CD14-positive monocyte (primary cell): ENCODE measurements at regions of chr10 and their contacts with region 1.

Region 1: DNA sequence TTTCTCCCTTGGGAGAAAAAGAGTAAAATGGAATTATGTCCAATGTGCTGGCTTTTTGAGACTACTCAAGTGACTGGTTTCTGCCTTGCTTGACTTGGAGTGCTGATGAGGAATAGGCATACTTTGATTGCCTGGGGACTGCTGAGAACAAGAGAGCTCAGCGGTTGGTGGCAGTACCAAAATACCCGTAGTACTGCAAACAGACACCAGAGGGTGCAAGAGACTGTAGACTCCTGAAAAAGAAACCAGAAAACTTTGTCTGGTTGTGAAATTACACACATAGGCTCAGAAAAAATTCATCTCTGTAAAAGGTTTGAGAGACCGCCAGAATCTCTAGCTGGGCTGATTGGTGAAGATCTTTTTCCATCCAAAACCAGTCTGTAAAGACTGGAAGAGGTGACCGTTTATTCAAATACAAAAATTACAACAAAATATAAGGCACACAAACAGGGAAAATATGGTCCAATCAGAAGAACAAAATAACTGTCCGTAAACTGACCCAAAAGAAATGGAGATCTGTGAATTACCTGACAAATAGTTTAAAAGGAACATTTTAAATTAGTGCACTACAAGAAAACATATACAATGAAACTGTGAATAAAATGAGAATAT is 18.5 kb downstream of the BICC1 start:
- DNase-seq: peak; percentile 50 to 76 (median 57)
- H3K4me3 ChIP-seq: no peak overlapping the region
- H3K4me3 Mint-ChIP-seq: no peak overlapping the region
- H3K27ac ChIP-seq: no peak overlapping the region
- H3K27ac Mint-ChIP-seq: no peak overlapping the region
- H3K4me1 ChIP-seq: no peaks in the 10 kb centered on the region
- H3K4me1 Mint-ChIP-seq: peaks cover 5% of the 10 kb centered on the region
- H3K27me3 ChIP-seq: no peaks in the 10 kb centered on the region
- H3K27me3 Mint-ChIP-seq: peaks cover 0 to 3% (median 2%) of the 10 kb centered on the region in 3 donors
- CTCF ChIP-seq: peak; percentile 92

Region 2: GRCh38 chr10:58712982-58713381 is 181.8 kb after region 1 on chr10:
- intact Hi-C with region 1: no loop called
- DNase-seq: no peak
- H3K4me3 ChIP-seq: no peak overlapping the region
- H3K4me3 Mint-ChIP-seq: no peak overlapping the region
- H3K27ac ChIP-seq: no peak overlapping the region
- H3K27ac Mint-ChIP-seq: no peak overlapping the region
- H3K4me1 ChIP-seq: no peaks in the 10 kb centered on the region
- H3K4me1 Mint-ChIP-seq: no peaks in the 10 kb centered on the region
- H3K27me3 ChIP-seq: no peaks in the 10 kb centered on the region
- H3K27me3 Mint-ChIP-seq: peaks cover 0 to 2% (median 0%) of the 10 kb centered on the region in 3 donors
- CTCF ChIP-seq: no peak

Region 3: GRCh38 chr10:58743466-58744115 is 212.4 kb after region 1 on chr10:
- intact Hi-C with region 1: no loop called
- DNase-seq: no peak
- H3K4me3 ChIP-seq: no peak overlapping the region
- H3K4me3 Mint-ChIP-seq: no peak overlapping the region
- H3K27ac ChIP-seq: no peak overlapping the region
- H3K27ac Mint-ChIP-seq: no peak overlapping the region
- H3K4me1 ChIP-seq: no peaks in the 10 kb centered on the region
- H3K4me1 Mint-ChIP-seq: no peaks in the 10 kb centered on the region
- H3K27me3 ChIP-seq: no peaks in the 10 kb centered on the region
- H3K27me3 Mint-ChIP-seq: peaks cover 0 to 2% (median 0%) of the 10 kb centered on the region in 3 donors
- CTCF ChIP-seq: no peak

Region 4: DNA sequence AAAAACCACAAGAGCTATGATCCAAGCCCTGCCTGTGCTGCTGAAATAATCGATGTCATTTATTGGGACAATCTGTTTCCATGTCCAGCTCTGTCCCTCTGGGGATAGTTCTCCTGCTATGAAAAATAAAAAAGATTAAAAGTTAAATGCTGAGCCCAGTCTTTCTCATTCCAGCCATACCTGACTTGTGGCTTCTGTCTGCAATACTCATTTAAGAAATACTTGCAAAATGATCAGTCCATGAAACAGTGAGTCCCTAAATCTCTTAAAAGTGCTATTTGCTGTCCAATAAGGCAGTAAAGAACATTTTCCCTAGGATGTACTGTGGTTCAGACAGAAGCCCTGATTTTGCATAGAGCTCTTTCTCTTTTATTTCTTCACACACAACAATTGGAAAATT is 1086.8 kb after region 1 on chr10:
- intact Hi-C with region 1: loop called in 1 of 2 experiments (anchors 5 kb)
- DNase-seq: no peak
- H3K4me3 ChIP-seq: no peak overlapping the region
- H3K4me3 Mint-ChIP-seq: no peak overlapping the region
- H3K27ac ChIP-seq: no peak overlapping the region
- H3K27ac Mint-ChIP-seq: no peak overlapping the region
- H3K4me1 ChIP-seq: no peaks in the 10 kb centered on the region
- H3K4me1 Mint-ChIP-seq: no peaks in the 10 kb centered on the region
- H3K27me3 ChIP-seq: no peaks in the 10 kb centered on the region
- H3K27me3 Mint-ChIP-seq: peaks cover 0 to 2% (median 1%) of the 10 kb centered on the region in 3 donors
- CTCF ChIP-seq: no peak